Activated naive CD4-positive, alpha-beta T cell treated with anti-CD3 and anti-CD28 coated beads for 36 hours (primary cell): ENCODE measurements at regions of chr4 and their contacts with region 1.

Region 1: DNA sequence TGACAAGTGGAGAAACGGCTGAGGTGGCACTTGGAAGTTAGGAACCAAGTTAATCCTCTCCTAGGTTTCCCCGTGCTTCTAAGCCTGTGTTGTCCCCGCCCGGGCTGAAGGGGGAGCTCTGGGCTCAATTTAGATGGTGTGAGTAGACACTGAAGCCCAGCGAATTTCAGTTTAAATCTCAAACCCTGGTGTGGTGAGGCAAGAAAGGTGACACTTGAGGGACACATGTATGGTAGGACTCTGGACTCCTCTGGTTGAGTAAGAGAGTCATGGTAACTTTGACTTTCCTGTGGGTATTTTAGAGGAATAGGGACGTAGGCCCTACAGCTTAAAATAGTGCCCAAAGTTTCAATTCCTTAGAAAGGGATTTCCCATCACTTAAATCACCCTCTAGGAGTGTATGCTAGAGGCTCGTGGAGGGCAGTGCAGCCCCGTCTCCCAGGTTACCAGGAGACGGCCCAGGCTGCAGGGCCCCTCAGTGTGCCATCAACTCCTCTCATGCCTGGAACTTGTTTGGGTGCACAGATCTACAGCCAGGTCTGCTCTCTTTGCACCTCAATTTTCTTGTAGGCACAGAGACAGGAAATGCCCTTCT is 24.0 kb downstream of the HAND2 start:
- DNase-seq: peak; percentile 74
- H3K4me3 Mint-ChIP-seq: peak overlapping the region; percentile 12
- H3K27ac Mint-ChIP-seq: no peak overlapping the region
- H3K4me1 Mint-ChIP-seq: peaks cover 39% of the 10 kb centered on the region
- H3K27me3 Mint-ChIP-seq: peaks cover 88% of the 10 kb centered on the region

Region 2: GRCh38 chr4:173370477-173371291 is 135.3 kb before region 1 on chr4 and contains the start of gene SAP30:
- CTCF ChIA-PET with region 1: no interaction called
- intact Hi-C with region 1: loop called (anchors 5 kb)
- DNase-seq: peak; percentile 98
- H3K4me3 Mint-ChIP-seq: peak within 1 kb of the TSS; percentile 99
- H3K27ac Mint-ChIP-seq: peak within 1 kb of the TSS; percentile 99
- H3K4me1 Mint-ChIP-seq: peaks cover 18% of the 10 kb centered on the region
- H3K27me3 Mint-ChIP-seq: peaks cover 20% of the 10 kb centered on the region
- total RNA-seq, gene SAP30: 9.2 to 9.7 TPM

Region 3: DNA sequence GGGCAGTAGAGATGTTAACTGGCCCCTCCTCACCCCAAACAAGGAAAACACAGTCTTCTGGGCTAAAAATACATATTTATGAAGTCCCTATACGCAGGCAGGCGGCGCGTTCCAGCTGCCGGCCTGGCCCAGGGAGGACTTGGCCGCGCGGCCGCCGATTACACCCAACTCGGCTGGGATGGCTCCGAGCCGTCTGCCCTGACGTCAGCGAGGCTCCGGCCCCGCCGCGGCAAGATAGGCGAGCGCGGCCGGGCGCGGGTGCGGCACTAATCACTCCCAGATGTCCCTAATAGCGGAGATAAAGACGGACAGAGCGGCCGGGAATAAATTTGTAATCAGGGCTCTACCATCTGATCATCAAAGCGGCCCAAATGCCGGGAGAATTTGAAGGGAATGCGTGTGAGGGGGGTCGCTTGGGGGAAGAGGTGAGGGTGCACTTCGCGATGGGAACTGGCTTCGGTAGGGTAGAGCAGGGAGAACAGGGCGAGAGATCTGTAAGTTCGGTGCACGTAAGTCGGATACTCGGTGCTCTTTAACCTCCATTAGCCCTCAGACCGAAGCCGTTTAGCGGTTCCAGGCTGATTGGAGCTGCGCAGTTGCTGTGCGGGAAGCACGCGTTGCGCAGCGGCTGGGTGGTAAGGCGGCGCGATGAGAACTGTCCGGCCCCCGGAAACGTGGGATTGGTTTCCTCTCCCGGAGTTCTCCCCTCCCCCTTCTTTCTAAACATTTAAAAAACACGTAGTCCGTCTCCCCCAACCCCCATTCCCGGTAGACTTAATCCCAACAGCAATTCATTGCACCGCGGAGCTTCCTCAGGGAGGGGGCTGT is 16.3 kb after region 1 on chr4:
- CTCF ChIA-PET with region 1: interaction called, 7 read pairs
- intact Hi-C with region 1: loop called (anchors 1 kb)
- DNase-seq: no peak
- H3K4me3 Mint-ChIP-seq: peak overlapping the region; percentile 26
- H3K27ac Mint-ChIP-seq: no peak overlapping the region
- H3K4me1 Mint-ChIP-seq: peaks cover 17% of the 10 kb centered on the region
- H3K27me3 Mint-ChIP-seq: peaks cover 89% of the 10 kb centered on the region

Region 4: DNA sequence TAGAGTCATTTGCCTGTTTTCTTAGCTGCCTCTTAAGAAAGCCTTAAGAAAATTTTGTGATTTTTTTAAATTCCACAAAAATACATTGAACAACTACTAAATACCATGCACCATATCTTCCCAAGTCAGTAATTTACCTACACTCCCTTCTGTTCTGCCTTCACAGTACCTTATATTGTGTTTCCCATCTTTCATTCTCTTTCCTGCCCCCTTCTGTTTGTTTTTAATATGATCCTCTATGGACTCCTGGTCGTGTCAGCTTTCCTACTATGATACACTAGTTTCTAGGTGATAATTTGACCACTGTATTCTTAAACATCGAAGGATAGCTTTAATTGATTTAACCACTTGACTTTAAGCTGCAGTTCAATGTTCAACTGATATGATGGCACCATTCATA is 321.7 kb after region 1 on chr4:
- CTCF ChIA-PET with region 1: interaction called, 3 read pairs
- intact Hi-C with region 1: loop called (anchors 5 kb)
- DNase-seq: no peak
- H3K4me3 Mint-ChIP-seq: no peak overlapping the region
- H3K27ac Mint-ChIP-seq: no peak overlapping the region
- H3K4me1 Mint-ChIP-seq: no peaks in the 10 kb centered on the region
- H3K27me3 Mint-ChIP-seq: peaks cover 4% of the 10 kb centered on the region

Region 5: DNA sequence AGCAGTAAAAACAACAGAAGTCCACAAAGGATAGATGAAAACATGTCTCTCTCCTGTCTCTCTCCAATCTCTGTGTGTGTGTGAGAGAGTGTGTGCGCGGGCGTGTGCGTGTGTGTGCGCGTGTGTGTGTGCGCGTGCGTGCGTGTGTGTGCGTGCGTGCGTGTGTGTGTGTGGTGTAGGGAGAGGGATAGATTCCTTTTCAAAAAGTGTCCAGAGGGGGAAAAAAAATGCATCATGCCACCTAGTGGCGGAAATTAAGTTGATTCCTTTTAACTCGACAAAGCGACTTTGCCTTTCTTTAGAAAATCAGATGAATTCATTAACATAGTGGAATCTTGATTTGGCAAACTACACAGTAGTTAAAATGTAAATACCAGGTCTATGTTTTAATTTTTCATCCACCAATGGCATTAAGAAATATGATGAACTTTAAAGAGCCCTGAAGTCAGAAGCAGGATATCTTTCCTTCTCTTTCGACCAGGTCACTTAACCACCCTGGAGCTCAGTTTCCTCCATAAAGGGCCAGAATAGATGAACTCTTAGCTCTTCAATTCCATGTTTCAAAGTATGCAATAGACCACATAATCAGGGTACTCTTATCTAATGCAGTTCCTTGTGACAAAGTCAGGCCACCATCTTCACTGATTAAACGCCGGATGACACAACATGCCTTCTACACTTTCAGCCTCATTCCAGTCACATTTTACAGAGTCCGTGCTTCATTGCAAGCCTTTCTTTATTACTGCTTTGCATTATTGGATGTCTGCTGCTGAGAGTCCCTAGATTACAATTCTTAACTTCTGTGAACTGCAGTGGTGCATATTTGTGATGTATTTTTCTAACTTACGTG is 614.6 kb after region 1 on chr4:
- CTCF ChIA-PET with region 1: interaction called, 3 read pairs
- intact Hi-C with region 1: loop called (anchors 1 kb)
- DNase-seq: peak; percentile 27
- H3K4me3 Mint-ChIP-seq: no peak overlapping the region
- H3K27ac Mint-ChIP-seq: no peak overlapping the region
- H3K4me1 Mint-ChIP-seq: no peaks in the 10 kb centered on the region
- H3K27me3 Mint-ChIP-seq: peaks cover 43% of the 10 kb centered on the region

Region 6: DNA sequence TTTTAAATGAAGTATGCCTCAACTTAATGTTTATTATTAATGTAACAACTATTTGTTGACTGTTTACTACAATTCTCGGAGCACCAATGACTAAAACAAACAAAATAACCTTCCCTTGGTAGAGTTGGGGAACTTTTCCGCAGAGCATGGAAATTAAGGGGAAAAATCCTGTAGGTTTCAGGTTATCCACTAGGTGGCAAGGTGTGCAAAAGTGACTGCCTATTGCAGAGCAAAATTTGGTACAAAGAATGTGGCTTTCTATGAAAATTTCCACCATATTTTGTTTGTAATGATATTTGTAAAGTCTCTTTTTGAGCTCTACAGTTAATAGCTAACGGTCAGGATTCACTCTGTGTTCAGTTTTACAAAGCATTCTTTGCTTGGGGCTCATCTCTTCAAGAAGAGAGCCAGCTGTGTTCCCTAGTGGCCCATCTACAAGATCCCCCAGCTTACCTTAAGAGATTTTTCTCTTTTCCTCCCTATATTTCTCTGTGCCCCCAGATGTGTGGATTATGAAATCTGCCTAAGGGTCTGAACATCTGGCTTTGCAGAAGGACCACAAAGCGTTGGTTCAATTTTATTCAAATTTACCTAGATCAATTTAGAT is 716.3 kb after region 1 on chr4:
- CTCF ChIA-PET with region 1: no interaction called
- intact Hi-C with region 1: loop called (anchors 5 kb)
- DNase-seq: peak; percentile 13
- H3K4me3 Mint-ChIP-seq: no peak overlapping the region
- H3K27ac Mint-ChIP-seq: no peak overlapping the region
- H3K4me1 Mint-ChIP-seq: peaks cover 9% of the 10 kb centered on the region
- H3K27me3 Mint-ChIP-seq: peaks cover 39% of the 10 kb centered on the region

Region 7: DNA sequence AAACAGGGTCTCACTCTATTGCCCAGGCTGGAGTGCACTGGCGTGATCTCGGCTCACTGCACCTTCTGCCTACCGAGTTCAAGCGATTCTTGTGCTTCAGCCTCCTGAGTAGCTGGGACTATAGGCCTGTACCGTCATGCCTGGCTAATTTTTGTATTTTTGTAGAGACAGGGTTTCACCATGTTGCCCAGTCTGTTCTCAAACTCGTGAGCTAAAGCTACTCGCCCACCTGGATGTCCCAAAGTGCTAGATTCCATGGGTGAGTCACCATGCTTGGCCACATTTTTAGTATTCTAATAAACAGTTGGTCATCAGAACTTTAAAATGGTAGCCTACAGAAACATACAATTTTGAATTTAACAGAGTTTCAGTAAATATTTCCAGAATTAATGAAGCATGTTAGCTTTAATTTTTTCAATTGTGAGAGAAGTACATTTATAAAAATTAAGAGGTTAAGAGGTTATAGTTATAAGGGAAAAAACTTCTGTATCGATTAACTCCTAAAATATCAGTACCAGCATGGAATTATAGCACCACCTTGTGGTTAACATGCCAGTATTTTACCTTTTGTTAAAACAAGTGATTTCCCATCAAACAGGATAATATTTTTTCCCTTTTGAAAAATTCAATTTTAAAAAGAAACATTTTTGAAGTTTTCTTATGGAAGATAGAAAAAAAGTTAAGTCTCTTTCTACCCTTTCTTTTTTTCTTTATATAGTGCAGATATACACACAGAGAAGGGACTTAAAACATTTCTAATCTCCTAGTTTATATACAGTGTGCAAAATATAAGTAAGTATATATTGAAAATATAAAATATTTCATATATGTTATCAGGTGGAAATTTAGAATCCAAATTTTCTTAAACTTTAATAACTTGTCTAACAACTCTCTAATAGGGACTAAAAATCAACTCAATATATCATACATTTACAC is 813.1 kb after region 1 on chr4:
- CTCF ChIA-PET with region 1: no interaction called
- intact Hi-C with region 1: loop called (anchors 5 kb)
- DNase-seq: no peak
- H3K4me3 Mint-ChIP-seq: no peak overlapping the region
- H3K27ac Mint-ChIP-seq: no peak overlapping the region
- H3K4me1 Mint-ChIP-seq: no peaks in the 10 kb centered on the region
- H3K27me3 Mint-ChIP-seq: no peaks in the 10 kb centered on the region

Region 8: GRCh38 chr4:174669278-174669677 is 1163.3 kb after region 1 on chr4:
- CTCF ChIA-PET with region 1: no interaction called
- intact Hi-C with region 1: no loop called
- DNase-seq: no peak
- H3K4me3 Mint-ChIP-seq: no peak overlapping the region
- H3K27ac Mint-ChIP-seq: no peak overlapping the region
- H3K4me1 Mint-ChIP-seq: no peaks in the 10 kb centered on the region
- H3K27me3 Mint-ChIP-seq: no peaks in the 10 kb centered on the region